Thyroid gland (tissue), 4 donors: ENCODE measurements at regions of chr16 and their contacts with region 1.

Region 1: GRCh38 chr16:10181196-10182162 is 749 bp downstream of the GRIN2A start:
- DNase-seq: peak; percentile 65 to 73
- H3K4me3 ChIP-seq: peak overlapping the region in 1 of 3 donors; percentile 26
- H3K27ac ChIP-seq: no peak overlapping the region
- H3K4me1 ChIP-seq: peaks cover 20 to 28% of the 10 kb centered on the region in 2 donors
- H3K27me3 ChIP-seq: peaks cover 6% of the 10 kb centered on the region
- CTCF ChIP-seq: peak; percentile 75 to 95 (median 90)
- POLR2A ChIP-seq: no peak

Region 2: DNA sequence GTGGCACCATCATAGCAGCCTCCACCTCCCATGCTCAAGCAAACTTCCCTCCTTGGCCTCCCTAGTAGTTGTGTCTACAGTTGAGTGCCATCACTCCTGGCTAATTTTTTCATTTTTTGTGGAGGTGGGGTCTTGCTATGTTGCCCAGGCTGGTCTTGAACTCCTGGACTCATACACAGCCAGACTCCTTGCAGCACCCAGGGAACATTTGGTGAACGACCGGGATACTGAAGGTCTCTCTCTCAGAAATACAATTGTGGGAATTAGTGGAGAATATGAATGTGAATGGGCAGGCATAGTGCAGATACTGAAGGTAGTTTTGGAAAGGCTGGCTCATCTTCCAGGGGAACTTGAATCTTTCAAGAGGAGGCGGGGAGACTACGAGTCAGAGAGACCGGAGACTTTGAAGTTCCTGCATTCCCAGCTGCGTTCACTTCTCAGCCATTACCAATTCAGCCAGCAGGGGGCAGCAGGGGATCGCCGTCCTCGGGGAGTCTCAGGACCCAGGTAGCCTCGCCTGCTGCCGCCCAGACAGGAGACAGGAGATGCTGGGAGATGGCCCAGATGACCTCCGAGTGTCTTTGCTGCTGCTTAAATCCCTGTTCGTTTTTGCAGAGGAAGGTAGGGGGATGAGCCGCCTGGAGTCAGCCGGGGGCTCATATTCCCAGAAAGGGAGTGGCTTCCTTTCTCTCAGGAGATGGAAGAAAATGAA is 1021.5 kb before region 1 on chr16:
- intact Hi-C with region 1: loop called (anchors 10 kb)
- DNase-seq: peak; percentile 63 to 73
- H3K4me3 ChIP-seq: no peak overlapping the region
- H3K27ac ChIP-seq: no peak overlapping the region
- H3K4me1 ChIP-seq: no peaks in the 10 kb centered on the region
- H3K27me3 ChIP-seq: no peaks in the 10 kb centered on the region
- CTCF ChIP-seq: peak; percentile 38 to 82 (median 61)
- POLR2A ChIP-seq: no peak

Region 3: DNA sequence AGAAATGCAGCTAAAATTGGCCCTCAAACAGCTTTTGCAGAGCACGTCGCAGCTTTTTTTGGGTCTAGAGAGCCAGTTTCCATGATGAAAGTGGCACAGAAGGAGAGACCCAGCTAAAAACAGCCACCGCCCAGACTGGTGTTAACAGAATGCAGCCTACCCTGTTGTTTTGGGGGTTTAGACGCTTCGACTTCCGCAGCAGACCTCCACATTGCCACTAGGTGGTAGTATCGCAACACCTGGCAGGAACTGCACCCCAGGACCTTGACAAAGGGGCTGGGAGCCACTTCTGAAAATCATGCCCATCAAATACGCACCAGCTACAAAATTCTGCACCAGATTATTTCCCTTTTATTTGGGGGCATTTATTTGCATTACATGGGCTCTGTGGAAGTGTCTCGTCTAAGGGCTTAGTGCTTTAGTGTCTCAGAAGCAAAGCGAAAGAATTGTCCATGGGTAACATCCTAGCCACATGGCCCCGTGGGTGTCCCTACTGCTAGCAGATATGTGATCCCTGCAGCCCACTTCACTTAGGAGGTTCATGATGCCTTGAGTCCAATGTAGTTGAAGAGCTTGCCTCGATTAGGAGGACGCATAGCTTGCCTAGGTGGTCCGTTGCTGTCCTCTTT is 922.9 kb before region 1 on chr16:
- intact Hi-C with region 1: loop called (anchors 10 kb)
- DNase-seq: peak; percentile 32 to 37
- H3K4me3 ChIP-seq: no peak overlapping the region
- H3K27ac ChIP-seq: no peak overlapping the region
- H3K4me1 ChIP-seq: peaks cover 0 to 6% of the 10 kb centered on the region in 2 donors
- H3K27me3 ChIP-seq: no peaks in the 10 kb centered on the region
- CTCF ChIP-seq: peak; percentile 25 to 74 (median 46)
- POLR2A ChIP-seq: no peak

Region 4: GRCh38 chr16:9647981-9648712 is 533.3 kb before region 1 on chr16:
- intact Hi-C with region 1: loop called (anchors 10 kb)
- DNase-seq: peak; percentile 44 to 58
- H3K4me3 ChIP-seq: no peak overlapping the region
- H3K27ac ChIP-seq: peak overlapping the region in 1 of 3 donors; percentile 11
- H3K4me1 ChIP-seq: peaks cover 9 to 17% of the 10 kb centered on the region in 2 donors
- H3K27me3 ChIP-seq: no peaks in the 10 kb centered on the region
- CTCF ChIP-seq: peak; percentile 18 to 67 (median 52)
- POLR2A ChIP-seq: no peak